Posterior vena cava (tissue), 2 donors: ENCODE measurements at regions of chr3 and their contacts with region 1.

Region 1: GRCh38 chr3:184371570-184372018 is 6.4 kb downstream of the THPO start:
- DNase-seq: peak; percentile 93

Region 2: GRCh38 chr3:183410280-183410679 is 961.3 kb before region 1 on chr3:
- intact Hi-C with region 1: no loop called
- DNase-seq: no peak

Region 3: GRCh38 chr3:184513276-184514170 is 141.9 kb after region 1 on chr3:
- intact Hi-C with region 1: loop called in 1 of 2 experiments (anchors 5 kb)
- DNase-seq: peak; percentile 95

Region 4: DNA sequence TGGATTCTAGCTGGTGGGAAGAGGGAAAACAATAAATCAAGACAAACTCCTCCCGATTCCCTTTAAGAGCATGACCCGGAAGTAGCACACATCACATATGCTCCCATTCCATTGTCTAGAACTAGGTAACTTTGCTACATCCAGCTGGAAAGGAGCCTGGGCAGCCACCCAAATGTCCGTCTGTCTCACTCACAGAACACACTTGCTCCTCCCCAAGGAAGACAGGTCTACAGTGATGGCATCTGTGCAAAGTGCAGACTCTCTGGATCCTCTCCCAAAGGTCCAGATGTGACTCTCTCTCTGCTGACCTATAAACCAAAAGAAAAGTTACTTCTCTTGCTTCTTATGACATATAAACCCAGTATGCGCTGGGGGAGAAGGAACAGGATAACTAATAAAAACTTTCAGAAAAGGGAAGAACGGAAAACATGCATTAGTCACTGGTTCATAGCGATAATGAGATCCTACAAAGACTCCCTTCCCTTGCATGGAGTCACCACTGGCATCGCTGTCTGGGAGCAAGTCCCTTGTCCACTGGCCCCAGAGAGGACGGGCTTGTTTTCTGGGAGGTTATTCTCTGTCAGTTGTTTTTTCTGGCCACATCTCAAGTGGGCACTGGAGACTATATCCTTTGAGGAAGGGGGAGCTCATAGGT is 160.2 kb after region 1 on chr3:
- intact Hi-C with region 1: loop called in 1 of 2 experiments (anchors 10 kb)
- DNase-seq: no peak

Region 5: DNA sequence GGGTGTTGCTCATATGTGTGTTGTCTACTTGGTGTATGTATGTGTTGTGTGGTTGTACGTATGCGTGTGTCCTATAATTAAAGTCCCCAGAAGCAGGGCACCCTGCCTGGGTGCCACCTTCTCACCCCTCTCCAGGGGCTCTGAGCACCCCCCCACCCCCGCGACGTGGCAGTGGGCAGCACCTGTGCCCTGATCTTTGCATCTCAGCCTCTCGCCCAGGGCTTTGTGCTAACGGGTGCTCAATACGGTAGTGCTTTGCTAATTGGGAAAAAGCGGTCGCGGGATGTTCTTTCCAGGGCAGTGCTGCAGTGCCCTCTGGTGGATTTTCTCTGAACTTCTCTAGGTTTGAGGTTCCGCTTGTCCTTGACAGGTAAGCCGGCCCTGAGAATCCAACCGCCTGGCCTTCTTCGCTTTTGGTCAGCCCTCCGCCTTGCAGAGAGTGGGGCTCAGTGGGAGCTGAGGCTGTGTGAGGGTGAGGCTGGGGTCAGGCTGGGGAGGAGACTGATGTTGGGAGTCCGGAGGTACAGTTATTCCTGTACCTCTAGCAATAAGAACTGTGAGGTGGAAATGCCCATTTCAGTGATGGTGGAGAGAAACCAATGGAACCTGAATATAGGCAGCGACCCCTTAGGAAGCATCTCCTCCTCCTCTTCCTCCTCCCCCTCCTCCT is 172.4 kb after region 1 on chr3:
- intact Hi-C with region 1: loop called (anchors 5 to 10 kb)
- DNase-seq: peak; percentile 83